K562 (cell line): ENCODE measurements at regions of chr16 and their contacts with region 1.

Region 1: DNA sequence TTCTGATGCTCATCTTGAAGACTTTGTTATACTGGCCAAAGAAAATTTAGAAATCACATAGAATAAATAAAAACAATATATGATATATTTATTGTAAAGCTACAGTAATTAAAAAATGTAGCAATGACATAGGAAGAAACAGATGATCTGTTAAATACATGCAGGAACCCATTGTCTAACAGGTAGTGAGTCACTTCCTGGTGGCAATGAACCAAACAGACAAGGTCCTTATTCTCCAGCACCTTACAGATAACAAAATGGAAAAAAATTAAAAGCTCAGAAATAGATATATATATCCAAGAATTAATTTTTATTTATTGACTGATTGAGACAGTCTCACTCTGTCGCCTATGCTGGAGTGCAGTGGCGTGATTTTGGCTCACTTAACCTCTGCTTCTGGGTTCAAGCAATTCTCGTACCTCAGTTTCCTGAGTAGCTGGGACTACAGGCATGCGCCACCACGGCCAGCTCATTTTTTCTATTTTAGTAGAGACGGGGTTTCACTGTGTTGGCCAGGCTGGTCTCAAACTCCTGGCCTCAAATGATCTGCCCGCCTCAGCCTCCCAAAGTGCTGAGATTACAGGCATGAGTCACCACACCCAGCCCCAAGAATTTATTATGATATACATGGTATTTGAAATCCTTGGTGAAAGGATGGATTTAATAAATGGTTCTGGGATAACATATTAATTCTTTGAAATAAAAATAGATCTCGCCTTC is 7.5 kb downstream of the NETO2 start:
- DNase-seq: peak in 1 of 4 experiments; percentile 12
- ATAC-seq: no peak
- H3K4me3 ChIP-seq: no peak overlapping the region
- H3K27ac ChIP-seq: no peak overlapping the region
- H3K4me1 ChIP-seq: peaks cover 0 to 14% of the 10 kb centered on the region in 2 experiments; a peak in 4 of 5 replicates
- H3K27me3 ChIP-seq: no peaks in the 10 kb centered on the region
- CTCF ChIP-seq: no peak
- EP300 ChIP-seq: no peak
- POLR2A ChIP-seq: no peak
- RAD21 ChIP-seq: no peak

Region 2: GRCh38 chr16:46801428-46802049 is 334.7 kb before region 1 on chr16:
- CTCF ChIA-PET with region 1: no interaction called
- POLR2A ChIA-PET with region 1: no interaction called
- in situ Hi-C with region 1: no loop called
- intact Hi-C with region 1: no loop called
- DNase-seq: no peak
- ATAC-seq: peak; percentile 54; the same call in 1 of the 3 replicates
- H3K4me3 ChIP-seq: no peak overlapping the region
- H3K27ac ChIP-seq: no peak overlapping the region
- H3K4me1 ChIP-seq: no peaks in the 10 kb centered on the region
- H3K27me3 ChIP-seq: no peaks in the 10 kb centered on the region
- CTCF ChIP-seq: peak in 2 of 3 experiments; percentile 28 to 43; a peak in 3 of 6 replicates
- EP300 ChIP-seq: no peak
- POLR2A ChIP-seq: no peak
- RAD21 ChIP-seq: peak in 1 of 2 experiments; percentile 62; a peak in 3 of 4 replicates

Region 3: GRCh38 chr16:46982335-46982734 is 153.9 kb before region 1 on chr16:
- CTCF ChIA-PET with region 1: no interaction called
- POLR2A ChIA-PET with region 1: no interaction called
- in situ Hi-C with region 1: loop called (anchors 5 kb)
- intact Hi-C with region 1: loop called (anchors 1 kb)
- DNase-seq: no peak
- ATAC-seq: no peak
- H3K4me3 ChIP-seq: no peak overlapping the region
- H3K27ac ChIP-seq: no peak overlapping the region
- H3K4me1 ChIP-seq: no peaks in the 10 kb centered on the region
- H3K27me3 ChIP-seq: peaks cover 11 to 19% of the 10 kb centered on the region in 2 experiments
- CTCF ChIP-seq: no peak
- EP300 ChIP-seq: no peak
- POLR2A ChIP-seq: no peak
- RAD21 ChIP-seq: no peak

Region 4: DNA sequence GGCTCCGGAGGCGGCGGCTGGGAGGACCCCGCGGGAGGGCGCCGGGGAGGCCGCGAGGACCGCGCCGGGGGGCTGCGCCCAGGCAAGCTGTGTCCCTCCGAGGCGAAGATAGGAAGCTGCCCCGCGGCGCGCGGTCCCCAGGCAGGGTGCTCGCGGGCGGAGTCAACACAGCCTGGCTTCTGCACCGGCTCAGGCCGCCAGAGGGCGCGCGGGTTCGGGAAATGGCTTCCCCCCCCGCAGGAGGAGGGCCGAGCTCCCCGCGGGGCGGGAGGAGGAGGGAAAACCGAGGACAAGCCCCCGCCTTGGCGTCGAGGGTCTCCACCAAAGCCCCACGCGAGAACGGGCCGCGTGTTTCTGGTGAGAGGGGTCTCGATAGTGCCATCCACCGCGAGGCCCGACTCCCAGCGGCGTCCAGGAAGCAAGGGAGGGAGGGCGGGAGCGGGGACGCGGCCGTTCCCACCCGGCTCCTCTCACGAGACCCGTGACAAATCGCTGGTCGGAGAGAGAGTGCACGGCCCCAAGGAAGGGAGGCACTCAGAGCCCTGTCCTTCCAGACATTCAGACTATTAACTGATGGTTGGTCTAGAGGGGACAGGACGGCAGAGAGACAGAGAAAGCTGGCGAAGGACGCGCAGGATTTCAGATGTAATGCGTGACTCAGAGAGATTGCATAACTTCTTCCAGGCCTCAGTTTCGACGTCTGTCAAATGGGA is 98.4 kb before region 1 on chr16:
- CTCF ChIA-PET with region 1: no interaction called
- POLR2A ChIA-PET with region 1: interaction called, 4 read pairs
- in situ Hi-C with region 1: no loop called
- intact Hi-C with region 1: loop called (anchors 10 kb)
- DNase-seq: peak; percentile 92 to 98 (median 97)
- ATAC-seq: peak; percentile 98
- H3K4me3 ChIP-seq: peak overlapping the region; percentile 61
- H3K27ac ChIP-seq: no peak overlapping the region
- H3K4me1 ChIP-seq: peaks cover 0 to 13% of the 10 kb centered on the region in 2 experiments; a peak in 3 of 5 replicates
- H3K27me3 ChIP-seq: peaks cover 15 to 43% of the 10 kb centered on the region in 2 experiments; a peak in 4 of 5 replicates
- CTCF ChIP-seq: peak; percentile 92 to 95 (median 94)
- EP300 ChIP-seq: no peak
- POLR2A ChIP-seq: no peak
- RAD21 ChIP-seq: peak; percentile 77 to 93

Region 5: GRCh38 chr16:47197536-47198179 is 61.4 kb after region 1 on chr16:
- CTCF ChIA-PET with region 1: no interaction called
- POLR2A ChIA-PET with region 1: no interaction called
- in situ Hi-C with region 1: no loop called
- intact Hi-C with region 1: no loop called
- DNase-seq: no peak
- ATAC-seq: no peak
- H3K4me3 ChIP-seq: no peak overlapping the region
- H3K27ac ChIP-seq: no peak overlapping the region
- H3K4me1 ChIP-seq: no peaks in the 10 kb centered on the region
- H3K27me3 ChIP-seq: no peaks in the 10 kb centered on the region
- CTCF ChIP-seq: no peak
- EP300 ChIP-seq: no peak
- POLR2A ChIP-seq: no peak
- RAD21 ChIP-seq: no peak